ENCODE measurements at regions of chr2 and their contacts with region 1.

Region 1: DNA sequence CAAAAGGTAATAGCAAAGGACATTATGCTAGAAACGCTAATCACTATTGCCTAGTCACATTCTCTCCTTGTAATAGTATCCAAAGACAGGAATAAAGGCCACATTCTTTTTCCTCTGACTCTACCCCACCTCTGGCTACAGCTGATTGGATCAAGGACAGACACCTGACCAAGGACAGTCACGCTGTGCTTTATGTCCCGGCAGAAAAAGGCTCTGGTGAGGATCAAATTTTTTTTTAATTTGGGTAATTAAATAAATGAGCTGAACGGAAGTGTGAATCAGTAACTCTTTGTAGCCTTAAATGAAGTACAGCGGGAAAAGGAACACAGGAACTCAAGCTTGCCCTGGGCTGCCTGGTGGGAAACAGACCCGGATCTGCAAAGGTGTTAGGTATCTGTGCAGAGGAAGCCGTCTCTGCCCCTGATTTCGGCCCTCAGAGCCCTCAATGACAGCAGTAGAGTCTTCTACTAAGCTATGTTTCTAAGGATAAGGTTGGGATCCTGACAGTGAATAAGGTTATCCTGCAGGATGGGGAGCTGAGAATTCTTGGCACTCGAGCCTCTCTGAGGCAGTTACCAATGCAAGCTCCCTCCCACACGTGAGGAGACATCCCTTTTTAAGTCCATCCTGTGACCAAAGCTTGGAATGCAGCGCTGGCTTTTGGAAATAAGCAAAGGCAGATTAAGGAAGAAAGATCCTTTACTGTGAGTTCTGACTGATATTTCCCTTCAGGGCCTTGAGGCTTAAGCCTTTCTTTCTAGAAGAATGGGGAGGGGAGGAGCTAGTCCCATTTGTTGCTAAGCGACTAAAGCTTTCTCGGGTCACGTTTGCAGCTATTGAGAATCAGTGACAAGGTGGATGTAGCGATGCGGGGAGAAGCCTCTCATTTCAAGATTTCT is 37.8 kb upstream of the IKZF2 start:
- DNase-seq: no peak
- ATAC-seq: no peak
- H3K4me3 ChIP-seq: no peak overlapping the region
- H3K27ac ChIP-seq: no peak overlapping the region
- H3K4me1 ChIP-seq: peaks cover 12% of the 10 kb centered on the region
- H3K27me3 ChIP-seq: no peaks in the 10 kb centered on the region
- CTCF ChIP-seq: no peak
- EP300 ChIP-seq: no peak
- POLR2A ChIP-seq: no peak
- RAD21 ChIP-seq: no peak

Region 2: DNA sequence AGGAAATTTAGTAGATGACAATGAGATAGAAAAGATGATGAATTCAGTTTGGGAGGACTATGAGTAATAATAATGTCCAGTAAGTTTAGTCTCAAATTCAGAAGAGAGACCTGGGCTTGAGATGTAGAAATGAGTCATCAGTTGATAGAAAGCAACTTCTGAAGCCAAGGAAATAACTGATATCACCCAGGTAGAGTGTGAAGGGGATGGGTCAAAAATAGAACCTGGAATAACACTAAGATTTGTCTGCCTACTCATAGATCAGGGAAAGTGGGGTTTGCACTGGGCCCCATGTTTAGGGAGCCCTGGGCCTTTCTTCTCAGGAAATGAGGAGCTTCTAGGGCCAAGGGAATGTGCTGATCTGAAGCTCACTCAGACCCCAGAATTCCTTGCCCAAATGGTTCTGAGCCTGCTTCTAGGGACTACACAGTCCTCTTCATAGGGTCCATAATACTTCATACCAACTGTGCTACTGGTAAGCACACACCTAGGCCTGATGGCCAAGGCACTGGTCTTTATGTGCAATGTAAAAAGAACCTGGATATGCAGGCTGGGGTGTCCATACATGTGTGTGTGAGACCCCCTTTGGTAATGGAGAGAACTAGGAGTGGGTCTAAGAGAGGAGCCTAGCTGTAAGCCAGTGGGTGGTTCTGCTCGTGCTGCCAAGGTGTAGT is 179.0 kb before region 1 on chr2:
- CTCF ChIA-PET with region 1: no interaction called
- POLR2A ChIA-PET with region 1: no interaction called
- RAD21 ChIA-PET with region 1: no interaction called
- SMC1A ChIA-PET with region 1: no interaction called
- in situ Hi-C with region 1: no loop called
- intact Hi-C with region 1: no loop called
- DNase-seq: no peak
- ATAC-seq: peak; percentile 35
- H3K4me3 ChIP-seq: no peak overlapping the region
- H3K27ac ChIP-seq: peak overlapping the region; percentile 16
- H3K4me1 ChIP-seq: peaks cover 20% of the 10 kb centered on the region
- H3K27me3 ChIP-seq: no peaks in the 10 kb centered on the region
- CTCF ChIP-seq: no peak
- EP300 ChIP-seq: no peak
- POLR2A ChIP-seq: peak; percentile 58; the same call in 1 of the 2 replicates
- RAD21 ChIP-seq: no peak

Region 3: DNA sequence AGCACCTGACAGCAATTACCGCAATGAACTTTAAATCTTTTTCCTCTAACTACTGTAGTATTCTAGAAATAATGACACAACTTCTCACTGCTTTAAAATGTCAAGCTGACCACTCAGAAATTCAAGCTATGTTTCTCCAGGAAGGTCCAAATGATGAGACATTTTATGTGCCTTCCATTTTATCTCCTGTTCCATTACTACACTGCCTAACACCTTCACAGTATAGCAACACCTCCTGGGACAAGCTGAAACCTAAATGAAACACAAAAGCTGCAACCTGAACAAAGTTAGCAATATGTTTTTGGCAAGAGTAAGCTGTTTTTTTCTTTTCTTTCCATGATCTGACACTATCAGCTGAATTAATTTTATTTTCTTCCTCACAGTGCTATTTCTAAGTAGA is 119.7 kb before region 1 on chr2:
- CTCF ChIA-PET with region 1: no interaction called
- POLR2A ChIA-PET with region 1: no interaction called
- RAD21 ChIA-PET with region 1: no interaction called
- SMC1A ChIA-PET with region 1: no interaction called
- in situ Hi-C with region 1: no loop called
- intact Hi-C with region 1: no loop called
- DNase-seq: no peak
- ATAC-seq: no peak
- H3K4me3 ChIP-seq: no peak overlapping the region
- H3K27ac ChIP-seq: no peak overlapping the region
- H3K4me1 ChIP-seq: peaks cover 3% of the 10 kb centered on the region; the same call in 1 of the 2 replicates
- H3K27me3 ChIP-seq: no peaks in the 10 kb centered on the region
- CTCF ChIP-seq: no peak
- EP300 ChIP-seq: no peak
- POLR2A ChIP-seq: no peak
- RAD21 ChIP-seq: no peak

Region 4: GRCh38 chr2:213166109-213166508 is 23.1 kb before region 1 on chr2:
- CTCF ChIA-PET with region 1: interaction called, 4 read pairs
- POLR2A ChIA-PET with region 1: interaction called, 14 read pairs
- RAD21 ChIA-PET with region 1: interaction called, 8 read pairs
- SMC1A ChIA-PET with region 1: interaction called, 29 read pairs
- in situ Hi-C with region 1: no loop called
- intact Hi-C with region 1: no loop called
- DNase-seq: no peak
- ATAC-seq: peak; percentile 93
- H3K4me3 ChIP-seq: no peak overlapping the region
- H3K27ac ChIP-seq: peak overlapping the region; percentile 76
- H3K4me1 ChIP-seq: peaks cover 35% of the 10 kb centered on the region
- H3K27me3 ChIP-seq: no peaks in the 10 kb centered on the region
- CTCF ChIP-seq: no peak
- EP300 ChIP-seq: peak in 1 of 2 experiments; percentile 19; a peak in 2 of 4 replicates
- POLR2A ChIP-seq: no peak
- RAD21 ChIP-seq: no peak

Region 5: GRCh38 chr2:213175526-213176162 is 13.6 kb before region 1 on chr2:
- CTCF ChIA-PET with region 1: interaction called, 10 read pairs
- POLR2A ChIA-PET with region 1: interaction called, 14 read pairs
- RAD21 ChIA-PET with region 1: interaction called, 11 read pairs
- SMC1A ChIA-PET with region 1: interaction called, 29 read pairs
- in situ Hi-C with region 1: no loop called
- intact Hi-C with region 1: no loop called
- DNase-seq: no peak
- ATAC-seq: no peak
- H3K4me3 ChIP-seq: no peak overlapping the region
- H3K27ac ChIP-seq: no peak overlapping the region
- H3K4me1 ChIP-seq: peaks cover 7% of the 10 kb centered on the region; the same call in 1 of the 2 replicates
- H3K27me3 ChIP-seq: no peaks in the 10 kb centered on the region
- CTCF ChIP-seq: no peak
- EP300 ChIP-seq: no peak
- POLR2A ChIP-seq: no peak
- RAD21 ChIP-seq: no peak

Region 6: DNA sequence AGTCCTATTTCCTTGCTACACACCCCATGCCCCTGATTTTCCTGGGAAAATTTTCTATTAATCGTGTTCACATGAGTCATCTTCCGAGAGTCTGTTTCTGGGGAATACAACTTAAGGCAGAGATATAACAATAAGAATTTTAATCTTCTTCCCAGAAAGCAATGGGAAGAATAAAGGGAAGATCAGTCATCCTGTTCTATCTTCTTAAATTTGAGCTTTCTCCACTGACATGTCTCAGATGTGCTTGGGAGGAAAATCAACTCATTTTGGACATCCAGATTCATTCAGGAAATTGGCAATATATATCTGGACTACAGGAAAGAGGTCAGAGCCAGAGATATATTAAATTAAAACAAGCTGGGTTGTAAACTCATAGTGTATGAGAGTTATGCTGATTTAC is 32.7 kb after region 1 on chr2:
- CTCF ChIA-PET with region 1: interaction called, 5 read pairs
- POLR2A ChIA-PET with region 1: interaction called, 7 read pairs
- RAD21 ChIA-PET with region 1: interaction called, 12 read pairs
- SMC1A ChIA-PET with region 1: interaction called, 21 read pairs
- in situ Hi-C with region 1: no loop called
- intact Hi-C with region 1: no loop called
- DNase-seq: no peak
- ATAC-seq: no peak
- H3K4me3 ChIP-seq: no peak overlapping the region
- H3K27ac ChIP-seq: no peak overlapping the region
- H3K4me1 ChIP-seq: peaks cover 5% of the 10 kb centered on the region; the same call in 1 of the 2 replicates
- H3K27me3 ChIP-seq: no peaks in the 10 kb centered on the region
- CTCF ChIP-seq: no peak
- EP300 ChIP-seq: no peak
- POLR2A ChIP-seq: no peak
- RAD21 ChIP-seq: no peak

Region 7: GRCh38 chr2:213227458-213227857 is 38.2 kb after region 1 on chr2:
- CTCF ChIA-PET with region 1: interaction called, 4 read pairs
- POLR2A ChIA-PET with region 1: interaction called, 7 read pairs
- RAD21 ChIA-PET with region 1: interaction called, 12 read pairs
- SMC1A ChIA-PET with region 1: interaction called, 21 read pairs
- in situ Hi-C with region 1: no loop called
- intact Hi-C with region 1: loop called (anchors 5 kb)
- DNase-seq: peak; percentile 88
- ATAC-seq: peak; percentile 82
- H3K4me3 ChIP-seq: no peak overlapping the region
- H3K27ac ChIP-seq: peak overlapping the region; percentile 92
- H3K4me1 ChIP-seq: peaks cover 49% of the 10 kb centered on the region
- H3K27me3 ChIP-seq: no peaks in the 10 kb centered on the region
- CTCF ChIP-seq: no peak
- EP300 ChIP-seq: no peak; a peak in 3 of 4 replicates
- POLR2A ChIP-seq: no peak
- RAD21 ChIP-seq: peak; percentile 30; the same call in 1 of the 2 replicates

Region 8: DNA sequence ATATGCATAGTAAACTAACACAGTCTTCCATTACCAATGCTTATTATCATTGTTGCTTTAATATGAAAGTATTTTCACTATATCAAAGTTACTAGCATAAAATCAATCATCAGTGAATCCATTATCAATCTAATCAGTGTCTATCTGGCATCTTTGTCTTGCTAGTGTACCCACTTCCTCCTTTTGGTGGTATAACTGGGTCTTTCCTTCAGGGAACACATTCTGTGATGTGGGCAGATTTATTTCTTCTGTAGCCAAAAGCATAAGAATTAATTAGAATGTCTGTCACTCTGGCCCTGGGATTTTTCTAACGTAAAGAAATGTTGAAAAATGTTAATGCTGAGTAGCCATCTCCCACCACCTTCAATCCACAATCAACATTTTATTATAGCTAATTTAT is 1065.8 kb after region 1 on chr2:
- CTCF ChIA-PET with region 1: no interaction called
- POLR2A ChIA-PET with region 1: no interaction called
- RAD21 ChIA-PET with region 1: no interaction called
- SMC1A ChIA-PET with region 1: no interaction called
- in situ Hi-C with region 1: no loop called
- intact Hi-C with region 1: no loop called
- DNase-seq: no peak
- ATAC-seq: peak; percentile 61
- H3K4me3 ChIP-seq: no peak overlapping the region
- H3K27ac ChIP-seq: no peak overlapping the region
- H3K4me1 ChIP-seq: no peaks in the 10 kb centered on the region
- H3K27me3 ChIP-seq: no peaks in the 10 kb centered on the region
- CTCF ChIP-seq: no peak
- EP300 ChIP-seq: no peak
- POLR2A ChIP-seq: no peak
- RAD21 ChIP-seq: no peak

Measured in GM12878 (cell line).